PC-9 (cell line): ENCODE measurements at regions of chr5 and their contacts with region 1.

Region 1: GRCh38 chr5:179821581-179822432 is 1.1 kb downstream of the SQSTM1 start:
- DNase-seq: peak; percentile 80 to 95
- H3K4me3 ChIP-seq: peak overlapping the region; percentile 98
- H3K27ac ChIP-seq: peak overlapping the region; percentile 100
- H3K4me1 ChIP-seq: peaks cover 55% of the 10 kb centered on the region
- H3K27me3 ChIP-seq: no peaks in the 10 kb centered on the region
- CTCF ChIP-seq: no peak

Region 2: DNA sequence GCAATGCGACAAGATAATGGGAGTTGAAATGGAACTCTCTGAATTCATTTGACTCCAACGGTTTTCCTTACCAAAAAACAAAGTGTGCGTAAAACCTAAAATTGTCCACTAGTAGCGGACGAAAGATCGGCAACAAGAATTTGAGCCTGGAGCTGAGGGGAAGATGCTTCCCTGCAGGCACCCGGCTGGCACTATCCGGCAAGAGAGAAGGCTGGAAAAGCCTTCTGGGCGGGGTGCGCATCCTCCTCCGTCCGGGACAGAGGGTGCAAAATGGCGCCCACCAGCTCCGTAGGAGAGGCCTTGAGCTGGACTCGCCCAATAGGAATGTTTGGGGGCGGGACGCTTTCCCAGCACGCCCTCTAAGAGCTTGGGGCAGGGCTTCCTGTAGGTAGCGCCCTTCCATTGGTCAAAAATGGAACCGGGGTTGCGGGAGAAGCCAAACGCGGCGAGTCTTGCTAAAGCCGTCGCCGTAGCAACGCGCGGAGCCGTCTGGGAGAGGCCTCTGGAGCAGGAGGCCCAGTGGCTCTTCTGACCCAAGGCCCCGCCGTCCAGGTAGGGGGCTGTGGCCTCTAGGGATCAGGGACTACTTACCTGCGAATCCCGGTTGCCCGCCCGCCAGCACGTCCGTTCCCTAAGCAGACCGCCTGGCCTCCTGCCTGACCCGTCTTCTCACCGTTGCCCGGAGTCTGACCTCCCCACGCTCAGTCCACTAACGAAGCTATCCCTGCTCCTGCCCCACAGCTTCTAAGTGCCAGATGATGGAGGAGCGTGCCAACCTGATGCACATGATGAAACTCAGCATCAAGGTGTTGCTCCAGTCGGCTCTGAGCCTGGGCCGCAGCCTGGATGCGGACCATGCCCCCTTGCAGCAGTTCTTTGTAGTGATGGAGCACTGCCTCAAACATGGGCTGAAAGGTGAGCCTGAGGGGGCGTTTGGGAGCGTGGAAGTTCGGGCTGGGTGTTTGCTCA is 262.2 kb before region 1 on chr5:
- CTCF ChIA-PET with region 1: no interaction called
- POLR2A ChIA-PET with region 1: interaction called, 10 read pairs
- intact Hi-C with region 1: loop called (anchors 5 kb)
- DNase-seq: peak; percentile 96 to 98
- H3K4me3 ChIP-seq: peak overlapping the region; percentile 91
- H3K27ac ChIP-seq: peak overlapping the region; percentile 78
- H3K4me1 ChIP-seq: peaks cover 9% of the 10 kb centered on the region; the same call in 1 of the 2 replicates
- H3K27me3 ChIP-seq: no peaks in the 10 kb centered on the region
- CTCF ChIP-seq: no peak

Region 3: DNA sequence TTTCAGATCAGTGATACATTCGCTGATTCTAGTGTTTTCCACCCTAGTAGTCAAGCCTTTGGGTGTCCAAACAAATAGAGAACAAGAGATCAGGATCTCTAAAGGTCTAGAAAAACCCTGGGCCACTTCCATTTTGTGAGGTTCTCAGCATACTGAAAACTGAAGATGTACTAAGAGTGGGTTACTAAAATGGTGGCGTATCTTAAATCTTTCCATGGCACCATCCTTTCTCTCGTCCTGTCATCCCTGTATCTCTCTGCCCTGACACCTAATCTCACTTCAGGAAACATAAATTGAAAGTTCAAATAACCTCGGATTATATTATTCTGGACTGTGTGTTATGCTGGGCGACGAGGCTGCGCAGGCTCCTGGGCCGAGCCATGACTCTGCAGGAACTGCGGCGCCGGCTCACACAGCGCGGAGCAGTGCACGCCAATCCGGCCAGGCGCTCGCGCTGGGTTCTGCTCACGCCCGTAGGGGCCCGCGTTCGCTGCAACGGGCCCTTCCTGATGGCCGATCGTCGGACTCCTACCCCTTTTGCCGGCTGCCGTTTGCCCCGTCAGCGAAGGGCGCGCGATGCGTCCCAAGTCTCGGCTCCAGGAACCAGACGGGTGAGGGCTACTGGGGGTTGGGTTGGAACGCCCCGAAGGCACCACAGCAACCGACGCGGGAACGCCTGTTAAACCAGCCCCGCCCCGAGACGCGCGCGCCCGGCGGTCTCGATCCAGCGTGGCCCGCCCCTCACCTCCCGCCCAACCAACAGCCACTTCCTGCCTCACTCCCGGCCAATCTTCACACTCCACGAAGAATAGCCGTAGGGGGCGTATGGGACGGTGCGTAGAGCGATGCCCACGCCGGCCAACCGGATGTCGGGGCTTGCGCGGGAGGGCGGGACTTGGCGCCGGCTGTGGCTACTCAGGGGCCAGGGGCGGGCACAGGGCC is 123.5 kb before region 1 on chr5:
- CTCF ChIA-PET with region 1: no interaction called
- POLR2A ChIA-PET with region 1: interaction called, 23 read pairs
- intact Hi-C with region 1: no loop called
- DNase-seq: peak; percentile 96 to 100
- H3K4me3 ChIP-seq: peak overlapping the region; percentile 89
- H3K27ac ChIP-seq: peak overlapping the region; percentile 91
- H3K4me1 ChIP-seq: peaks cover 25% of the 10 kb centered on the region
- H3K27me3 ChIP-seq: no peaks in the 10 kb centered on the region
- CTCF ChIP-seq: no peak

Region 4: GRCh38 chr5:179806250-179807222 is 15.3 kb before region 1 on chr5 and contains the start of gene MGAT4B:
- CTCF ChIA-PET with region 1: no interaction called
- POLR2A ChIA-PET with region 1: interaction called, 15 read pairs
- intact Hi-C with region 1: loop called (anchors 1 kb)
- DNase-seq: peak in 1 of 2 experiments; percentile 83
- H3K4me3 ChIP-seq: peak within 1 kb of the TSS; percentile 98
- H3K27ac ChIP-seq: peak within 1 kb of the TSS; percentile 53
- H3K4me1 ChIP-seq: peaks cover 40% of the 10 kb centered on the region
- H3K27me3 ChIP-seq: no peaks in the 10 kb centered on the region
- CTCF ChIP-seq: no peak
- total RNA-seq, gene MGAT4B: 337 and 413 TPM in 2 replicates

Region 5: GRCh38 chr5:179914032-179914755 is 92.4 kb after region 1 on chr5:
- CTCF ChIA-PET with region 1: interaction called, 3 read pairs
- POLR2A ChIA-PET with region 1: interaction called, 17 read pairs
- intact Hi-C with region 1: no loop called
- DNase-seq: peak; percentile 78 to 98
- H3K4me3 ChIP-seq: peak overlapping the region; percentile 35; the same call in 1 of the 2 replicates
- H3K27ac ChIP-seq: peak overlapping the region; percentile 87
- H3K4me1 ChIP-seq: peaks cover 21% of the 10 kb centered on the region
- H3K27me3 ChIP-seq: no peaks in the 10 kb centered on the region
- CTCF ChIP-seq: no peak